PC-3 (cell line): ENCODE measurements at regions of chr1 and their contacts with region 1.

Region 1: DNA sequence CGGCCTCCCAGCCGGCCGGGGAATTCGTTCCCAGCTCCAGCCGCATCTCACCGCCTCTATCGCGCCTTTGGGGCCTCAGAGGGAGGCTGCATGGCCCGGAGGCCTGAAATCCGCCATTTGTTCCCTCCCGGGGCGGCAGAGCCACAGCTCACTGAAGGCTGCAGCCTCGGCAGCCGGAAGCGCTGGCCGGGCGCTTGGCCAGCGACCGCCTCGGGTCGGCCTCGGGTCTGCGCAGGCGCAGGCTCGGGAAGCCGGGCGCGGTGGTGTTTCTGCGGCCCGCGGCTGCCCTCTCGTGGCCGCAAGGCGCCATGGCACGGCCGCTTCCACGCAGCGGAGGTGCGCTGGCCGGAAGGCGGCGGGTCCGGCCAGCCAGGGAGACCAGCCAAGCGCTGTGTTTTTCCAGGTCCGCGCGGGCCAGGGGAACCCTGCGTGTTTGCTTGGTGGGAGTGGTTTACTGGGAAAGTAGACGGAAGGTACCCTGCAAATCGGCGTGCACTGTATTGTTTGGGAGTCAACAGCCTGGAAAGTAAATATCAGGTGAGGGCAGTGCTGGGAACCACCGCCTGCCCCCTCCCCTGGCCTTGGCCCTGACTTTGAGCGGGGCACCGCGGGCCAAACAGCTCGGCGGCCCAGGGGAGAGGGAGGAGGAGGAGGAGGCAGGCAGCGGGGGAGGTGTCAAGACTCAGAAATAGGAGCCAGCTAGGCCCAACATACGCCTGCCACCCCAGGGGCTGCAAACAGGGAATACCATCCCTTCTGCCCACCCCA is 52.7 kb upstream of the CD34 start:
- DNase-seq: peak; percentile 96
- ATAC-seq: peak; percentile 90
- H3K4me3 ChIP-seq: peak overlapping the region; percentile 68
- H3K27ac ChIP-seq: no peak overlapping the region
- H3K4me1 ChIP-seq: peaks cover 14% of the 10 kb centered on the region
- H3K27me3 ChIP-seq: no peaks in the 10 kb centered on the region
- CTCF ChIP-seq: peak; percentile 97

Region 2: GRCh38 chr1:207828485-207829158 is 135.0 kb before region 1 on chr1:
- CTCF ChIA-PET with region 1: interaction called, 4 read pairs
- POLR2A ChIA-PET with region 1: no interaction called
- intact Hi-C with region 1: loop called (anchors 1 kb)
- DNase-seq: peak; percentile 93
- ATAC-seq: peak; percentile 72
- H3K4me3 ChIP-seq: no peak overlapping the region
- H3K27ac ChIP-seq: no peak overlapping the region
- H3K4me1 ChIP-seq: peaks cover 43% of the 10 kb centered on the region
- H3K27me3 ChIP-seq: no peaks in the 10 kb centered on the region
- CTCF ChIP-seq: peak; percentile 97

Region 3: DNA sequence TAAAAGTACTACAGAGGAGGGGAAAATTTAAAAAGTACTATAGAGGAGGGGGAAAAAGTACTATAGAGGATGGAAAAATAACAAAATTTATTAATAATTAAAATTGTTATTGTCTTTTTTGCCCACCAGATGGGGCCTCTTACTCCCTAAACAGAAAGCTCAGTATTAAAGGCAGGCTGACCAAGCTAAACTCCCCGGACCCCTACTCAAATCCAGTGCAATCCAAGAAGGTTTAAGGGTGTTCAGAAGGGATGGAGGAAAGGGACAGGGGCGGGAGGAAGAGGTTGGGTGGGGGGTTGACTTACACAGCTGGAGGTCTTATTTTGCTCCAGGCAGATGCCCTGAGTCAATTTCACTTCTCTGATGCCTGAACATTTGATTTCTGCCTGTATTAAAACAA is 66.4 kb before region 1 on chr1:
- CTCF ChIA-PET with region 1: interaction called, 67 read pairs
- POLR2A ChIA-PET with region 1: no interaction called
- intact Hi-C with region 1: loop called (anchors 1 kb)
- DNase-seq: peak; percentile 52
- ATAC-seq: peak; percentile 53
- H3K4me3 ChIP-seq: no peak overlapping the region
- H3K27ac ChIP-seq: no peak overlapping the region
- H3K4me1 ChIP-seq: no peaks in the 10 kb centered on the region
- H3K27me3 ChIP-seq: no peaks in the 10 kb centered on the region
- CTCF ChIP-seq: peak; percentile 57

Region 4: GRCh38 chr1:207948536-207949250 is 14.9 kb before region 1 on chr1:
- CTCF ChIA-PET with region 1: interaction called, 3 read pairs
- POLR2A ChIA-PET with region 1: no interaction called
- intact Hi-C with region 1: loop called (anchors 2 kb)
- DNase-seq: no peak
- ATAC-seq: no peak
- H3K4me3 ChIP-seq: no peak overlapping the region
- H3K27ac ChIP-seq: no peak overlapping the region
- H3K4me1 ChIP-seq: peaks cover 23% of the 10 kb centered on the region
- H3K27me3 ChIP-seq: peaks cover 15% of the 10 kb centered on the region; the same call in 1 of the 2 replicates
- CTCF ChIP-seq: no peak

Region 5: GRCh38 chr1:208115924-208116640 is 152.5 kb after region 1 on chr1:
- CTCF ChIA-PET with region 1: no interaction called
- POLR2A ChIA-PET with region 1: no interaction called
- intact Hi-C with region 1: no loop called
- DNase-seq: no peak
- ATAC-seq: no peak
- H3K4me3 ChIP-seq: no peak overlapping the region
- H3K27ac ChIP-seq: no peak overlapping the region
- H3K4me1 ChIP-seq: peaks cover 16% of the 10 kb centered on the region
- H3K27me3 ChIP-seq: no peaks in the 10 kb centered on the region
- CTCF ChIP-seq: no peak

Region 6: DNA sequence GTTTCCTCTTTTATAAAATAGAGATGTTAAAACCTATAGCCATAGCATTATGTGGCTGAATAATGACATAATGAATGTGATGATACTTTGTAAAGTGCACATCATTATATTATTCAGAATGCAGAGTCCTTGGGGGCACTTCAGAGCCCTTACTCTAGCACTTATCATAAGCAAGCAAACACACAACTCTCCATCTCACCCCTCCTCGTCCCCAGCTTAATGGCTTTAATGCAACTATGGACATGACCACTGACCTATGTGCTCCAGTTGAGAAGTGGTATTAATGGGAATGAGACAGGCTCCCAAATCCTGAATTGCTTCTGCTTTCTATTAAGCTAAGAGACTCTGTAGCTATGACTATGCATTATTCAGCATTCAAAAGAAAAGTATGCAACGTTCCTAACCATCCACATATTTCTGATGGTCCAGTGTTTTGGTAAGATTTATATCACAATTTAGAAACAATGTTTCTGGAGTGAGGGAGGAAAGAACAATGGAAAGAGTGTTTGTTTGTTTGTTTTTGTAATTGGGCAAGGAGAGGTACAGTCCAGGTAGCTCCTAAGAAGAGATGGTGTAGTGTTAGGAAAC is 474.6 kb after region 1 on chr1:
- CTCF ChIA-PET with region 1: no interaction called
- POLR2A ChIA-PET with region 1: interaction called, 15 read pairs
- intact Hi-C with region 1: no loop called
- DNase-seq: no peak
- ATAC-seq: no peak
- H3K4me3 ChIP-seq: no peak overlapping the region
- H3K27ac ChIP-seq: no peak overlapping the region
- H3K4me1 ChIP-seq: peaks cover 12% of the 10 kb centered on the region
- H3K27me3 ChIP-seq: no peaks in the 10 kb centered on the region
- CTCF ChIP-seq: no peak